ENCODE measurements at regions of chr20 and their contacts with region 1.

Region 1: GRCh38 chr20:4592316-4593148 is 129.2 kb upstream of the PRND start:
- DNase-seq: peak; percentile 74
- ATAC-seq: peak; percentile 79

Region 2: DNA sequence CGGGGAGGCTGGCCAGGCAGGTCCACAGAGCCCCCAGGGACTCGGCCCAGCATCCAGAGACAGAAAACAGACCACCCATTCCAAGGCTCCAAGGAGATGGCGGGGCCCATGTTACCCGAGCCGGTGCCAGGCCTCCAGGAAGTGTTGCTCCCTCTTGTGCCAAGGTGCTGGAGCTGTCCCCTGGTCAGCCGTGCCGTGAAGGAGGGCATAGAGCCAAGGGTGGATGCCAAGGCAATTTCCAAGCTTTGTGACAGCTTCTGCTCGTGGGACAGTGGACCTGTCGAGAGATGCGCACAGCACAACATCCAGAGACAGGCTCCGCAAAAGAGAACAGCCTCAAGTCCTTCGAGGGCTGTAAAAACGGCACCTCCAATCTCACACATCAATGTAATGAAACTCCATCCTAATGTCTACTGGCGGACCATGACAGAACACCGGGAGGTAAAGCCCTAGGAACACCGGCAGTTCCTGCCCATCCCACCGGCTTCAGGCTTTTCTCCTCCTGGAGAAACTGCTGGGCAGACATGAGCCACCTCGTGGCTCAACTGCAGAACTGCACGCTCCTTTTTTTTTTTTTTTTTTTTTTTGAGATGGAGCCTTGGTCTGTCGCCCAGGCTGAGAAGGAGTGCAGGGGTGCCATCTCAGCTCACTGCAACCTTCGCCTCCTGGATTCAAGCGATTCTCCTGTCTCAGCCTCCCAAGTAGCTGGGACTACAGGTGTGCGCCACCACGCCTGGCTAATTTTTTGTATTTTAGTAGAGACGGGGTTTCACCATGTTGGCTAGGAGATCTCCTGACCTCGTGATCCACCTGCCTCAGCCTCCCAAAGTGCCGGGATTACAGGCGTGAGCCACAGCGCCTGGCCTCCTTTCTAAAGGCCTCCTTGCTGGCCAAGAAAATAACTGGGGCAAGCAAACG is 1477.1 kb before region 1 on chr20:
- intact Hi-C with region 1: no loop called
- DNase-seq: no peak
- ATAC-seq: peak; percentile 26

Region 3: DNA sequence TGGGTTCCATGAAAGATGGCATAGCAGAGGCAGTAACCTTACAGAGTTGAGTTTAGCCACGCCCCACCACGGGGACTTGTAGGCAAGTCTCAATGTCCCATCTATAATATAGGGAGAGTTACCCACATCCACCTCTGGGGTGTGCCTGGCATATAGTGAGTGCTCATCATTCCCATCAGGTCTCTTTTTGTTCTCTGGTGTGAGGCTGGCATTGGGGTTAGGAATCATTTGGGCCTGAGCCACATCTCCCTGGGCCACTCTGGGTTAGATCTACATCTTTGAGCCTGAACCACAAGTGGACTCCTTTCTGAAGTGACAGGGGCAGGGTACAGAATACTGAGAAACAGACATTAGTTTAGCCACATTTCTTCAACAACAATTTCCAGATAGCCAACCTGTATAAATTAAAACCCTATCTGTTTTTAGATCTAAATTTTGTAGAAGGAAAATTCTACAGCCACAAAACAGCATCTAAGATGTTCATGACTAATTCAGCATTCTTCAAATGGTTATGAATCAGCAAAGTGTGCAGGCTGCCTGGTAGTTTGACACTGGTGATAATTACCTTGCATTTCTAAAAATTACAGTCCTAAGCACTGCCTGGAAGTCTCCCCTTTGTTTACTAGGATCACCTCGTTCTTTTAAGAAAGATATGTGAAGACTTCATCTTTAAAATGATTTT is 597.3 kb before region 1 on chr20:
- intact Hi-C with region 1: no loop called
- DNase-seq: no peak
- ATAC-seq: no peak

Region 4: DNA sequence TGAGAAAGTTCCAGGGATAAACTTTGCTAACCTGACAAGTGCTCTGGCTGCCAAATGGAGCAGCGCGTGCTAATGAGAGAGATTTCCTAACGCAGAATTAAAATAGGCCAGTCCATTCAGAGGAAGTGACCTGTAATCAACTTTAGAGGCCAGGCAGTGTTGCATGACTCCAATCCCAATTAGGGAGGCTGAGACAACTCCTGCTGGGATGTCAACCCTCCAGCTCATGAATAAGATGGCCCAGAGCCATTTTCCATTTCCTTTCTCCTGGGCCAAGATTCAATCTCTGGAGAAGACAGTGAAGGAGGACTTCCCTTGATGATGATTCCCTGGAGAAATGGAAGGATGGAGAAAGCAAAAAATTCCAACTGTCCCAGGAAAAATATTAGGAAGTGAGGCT is 335.7 kb before region 1 on chr20:
- intact Hi-C with region 1: loop called (anchors 10 kb)
- DNase-seq: no peak
- ATAC-seq: no peak

Measured in sciatic nerve (tissue), 2 donors.